ENCODE measurements at regions of chr16 and their contacts with region 1.

Region 1: GRCh38 chr16:56041686-56042085 is 149.6 kb upstream of the GNAO1 start:
- DNase-seq: no peak
- H3K4me3 ChIP-seq: no peak overlapping the region
- H3K27ac ChIP-seq: no peak overlapping the region
- H3K4me1 ChIP-seq: no peaks in the 10 kb centered on the region
- H3K27me3 ChIP-seq: no peaks in the 10 kb centered on the region
- CTCF ChIP-seq: peak in 2 of 4 experiments; percentile 45 to 46
- EP300 ChIP-seq: no peak
- POLR2A ChIP-seq: no peak

Region 2: DNA sequence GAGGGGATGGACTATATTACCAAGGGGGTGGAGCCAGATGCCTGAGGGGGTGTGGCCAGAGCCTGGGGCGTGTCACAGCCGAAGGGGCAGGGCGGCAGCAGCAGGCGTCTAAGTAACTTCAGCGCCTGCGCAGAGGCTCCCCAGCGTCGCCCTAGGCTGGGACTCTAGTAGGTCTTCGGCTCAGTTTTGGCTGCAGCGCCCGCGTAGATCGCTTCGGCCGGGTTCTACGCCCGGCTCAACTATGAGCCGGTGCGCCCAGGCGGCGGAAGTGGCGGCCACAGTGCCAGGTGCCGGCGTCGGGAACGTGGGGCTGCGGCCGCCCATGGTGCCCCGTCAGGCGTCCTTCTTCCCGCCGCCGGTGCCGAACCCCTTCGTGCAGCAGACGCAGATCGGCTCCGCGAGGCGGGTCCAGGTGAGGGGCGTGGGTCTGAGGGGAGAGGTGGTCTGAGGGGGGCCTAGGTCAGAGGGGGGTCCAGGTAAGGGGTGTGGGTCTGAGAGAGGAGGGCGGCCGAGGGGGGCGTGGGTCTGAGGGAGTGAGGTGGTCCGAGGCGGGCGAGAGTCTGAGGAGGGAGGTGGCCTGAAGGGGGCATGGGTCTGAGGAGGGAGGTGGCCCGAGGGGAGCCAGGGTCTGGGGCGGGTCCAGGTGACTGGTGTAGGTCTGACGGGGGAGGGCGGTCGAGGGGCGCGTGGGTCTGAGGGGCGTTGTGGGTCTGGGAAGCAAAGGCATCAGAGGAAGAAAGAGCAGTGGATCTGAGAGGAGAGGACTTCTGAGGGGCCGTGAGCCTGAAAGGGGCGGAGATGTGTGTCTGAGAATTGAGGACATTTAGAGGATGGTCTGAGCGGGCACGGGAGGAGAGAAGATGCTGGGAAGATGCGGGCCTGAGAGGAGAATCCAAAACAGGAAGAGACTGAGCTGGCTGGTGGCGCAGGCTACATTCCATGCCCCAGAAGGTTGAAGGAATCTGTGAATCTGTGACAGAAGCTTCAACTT is 532.5 kb before region 1 on chr16 and contains the start of gene LPCAT2:
- intact Hi-C with region 1: no loop called
- DNase-seq: peak; percentile 88
- H3K4me3 ChIP-seq: peak within 1 kb of the TSS; percentile 38 to 70 (median 55)
- H3K27ac ChIP-seq: peak within 1 kb of the TSS; percentile 39 to 78 (median 58)
- H3K4me1 ChIP-seq: peaks cover 0 to 10% (median 8%) of the 10 kb centered on the region in 4 donors
- H3K27me3 ChIP-seq: peaks cover 0 to 18% (median 17%) of the 10 kb centered on the region in 3 donors
- CTCF ChIP-seq: no peak
- EP300 ChIP-seq: no peak
- POLR2A ChIP-seq: peak in 1 of 2 donors; percentile 33
- total RNA-seq, gene LPCAT2: 6.6 to 12.8 (median 9.4) TPM

Region 3: GRCh38 chr16:56183266-56183665 is 141.6 kb after region 1 on chr16:
- intact Hi-C with region 1: loop called (anchors 10 kb)
- DNase-seq: no peak
- H3K4me3 ChIP-seq: no peak overlapping the region
- H3K27ac ChIP-seq: no peak overlapping the region
- H3K4me1 ChIP-seq: no peaks in the 10 kb centered on the region
- H3K27me3 ChIP-seq: no peaks in the 10 kb centered on the region
- CTCF ChIP-seq: no peak
- EP300 ChIP-seq: no peak
- POLR2A ChIP-seq: no peak

Region 4: GRCh38 chr16:56305956-56306565 is 264.4 kb after region 1 on chr16:
- intact Hi-C with region 1: no loop called
- DNase-seq: no peak
- H3K4me3 ChIP-seq: no peak overlapping the region
- H3K27ac ChIP-seq: no peak overlapping the region
- H3K4me1 ChIP-seq: peaks cover 0 to 19% (median 4%) of the 10 kb centered on the region in 4 donors
- H3K27me3 ChIP-seq: no peaks in the 10 kb centered on the region
- CTCF ChIP-seq: no peak
- EP300 ChIP-seq: no peak
- POLR2A ChIP-seq: no peak

Region 5: GRCh38 chr16:56317998-56318826 is 276.5 kb after region 1 on chr16:
- intact Hi-C with region 1: loop called (anchors 1 kb)
- DNase-seq: peak; percentile 92
- H3K4me3 ChIP-seq: peak overlapping the region; percentile 15 to 40 (median 32)
- H3K27ac ChIP-seq: peak overlapping the region in 3 of 4 donors; percentile 47 to 60 (median 47)
- H3K4me1 ChIP-seq: peaks cover 0 to 16% (median 8%) of the 10 kb centered on the region in 4 donors
- H3K27me3 ChIP-seq: no peaks in the 10 kb centered on the region
- CTCF ChIP-seq: peak; percentile 91 to 96 (median 94)
- EP300 ChIP-seq: no peak
- POLR2A ChIP-seq: no peak